SK-N-SH (cell line): ENCODE measurements at regions of chr7 and their contacts with region 1.

Region 1: DNA sequence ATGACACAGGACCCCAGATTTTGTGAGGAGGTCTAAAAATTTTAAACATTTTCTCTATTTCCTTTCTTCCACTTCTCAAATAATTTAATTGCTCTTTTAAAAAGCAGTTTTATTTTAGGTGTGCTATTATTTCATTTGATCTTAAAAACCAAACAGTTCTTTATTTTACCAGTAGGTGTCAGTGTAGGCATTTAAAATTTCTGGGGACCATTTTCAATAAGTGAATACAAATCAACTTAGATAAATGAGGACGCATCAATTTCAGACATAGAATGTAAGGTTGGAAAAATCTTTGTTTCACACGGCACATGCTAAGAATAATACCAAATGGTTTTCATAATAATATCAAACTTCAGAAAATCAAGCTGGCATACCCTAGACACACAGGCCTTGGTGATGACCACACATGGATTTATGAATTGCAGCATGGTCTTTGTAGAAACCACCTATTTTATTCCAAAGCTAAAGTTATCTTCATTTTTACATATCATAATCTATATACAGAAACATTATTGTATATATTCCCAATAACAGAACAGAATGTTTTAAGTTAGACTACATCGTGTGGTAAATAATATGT is 127.6 kb upstream of the SLC26A5 start:
- DNase-seq: peak; percentile 27
- H3K4me3 ChIP-seq: no peak overlapping the region; a peak in 1 of 4 replicates
- H3K27ac ChIP-seq: no peak overlapping the region
- H3K4me1 ChIP-seq: no peaks in the 10 kb centered on the region
- H3K27me3 ChIP-seq: no peaks in the 10 kb centered on the region
- CTCF ChIP-seq: peak; percentile 95
- EP300 ChIP-seq: no peak
- RAD21 ChIP-seq: peak; percentile 85

Region 2: DNA sequence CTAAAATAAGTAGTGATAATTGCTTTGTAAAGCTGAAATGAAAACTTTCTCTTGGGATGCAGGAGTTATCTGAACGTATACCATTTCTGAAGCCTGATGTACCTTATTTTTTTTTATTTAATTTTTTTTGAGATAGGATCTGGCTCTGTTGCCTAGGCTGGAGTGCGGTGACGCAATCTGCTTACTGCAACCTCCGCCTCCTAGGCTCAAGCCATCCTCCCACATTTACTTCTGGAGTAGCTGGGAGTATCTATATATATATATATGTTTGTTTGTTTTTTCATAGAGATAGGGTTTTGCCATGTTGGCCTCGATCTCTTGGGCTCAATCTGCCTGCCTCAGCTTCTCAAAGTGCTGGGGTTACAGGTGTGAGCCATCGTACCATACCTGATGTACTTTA is 273.9 kb before region 1 on chr7:
- CTCF ChIA-PET with region 1: no interaction called
- POLR2A ChIA-PET with region 1: no interaction called
- DNase-seq: no peak
- H3K4me3 ChIP-seq: no peak overlapping the region
- H3K27ac ChIP-seq: no peak overlapping the region
- H3K4me1 ChIP-seq: peaks cover 7 to 15% of the 10 kb centered on the region in 2 experiments; a peak in 2 of 4 replicates
- H3K27me3 ChIP-seq: no peaks in the 10 kb centered on the region
- CTCF ChIP-seq: no peak
- EP300 ChIP-seq: no peak
- RAD21 ChIP-seq: no peak

Region 3: DNA sequence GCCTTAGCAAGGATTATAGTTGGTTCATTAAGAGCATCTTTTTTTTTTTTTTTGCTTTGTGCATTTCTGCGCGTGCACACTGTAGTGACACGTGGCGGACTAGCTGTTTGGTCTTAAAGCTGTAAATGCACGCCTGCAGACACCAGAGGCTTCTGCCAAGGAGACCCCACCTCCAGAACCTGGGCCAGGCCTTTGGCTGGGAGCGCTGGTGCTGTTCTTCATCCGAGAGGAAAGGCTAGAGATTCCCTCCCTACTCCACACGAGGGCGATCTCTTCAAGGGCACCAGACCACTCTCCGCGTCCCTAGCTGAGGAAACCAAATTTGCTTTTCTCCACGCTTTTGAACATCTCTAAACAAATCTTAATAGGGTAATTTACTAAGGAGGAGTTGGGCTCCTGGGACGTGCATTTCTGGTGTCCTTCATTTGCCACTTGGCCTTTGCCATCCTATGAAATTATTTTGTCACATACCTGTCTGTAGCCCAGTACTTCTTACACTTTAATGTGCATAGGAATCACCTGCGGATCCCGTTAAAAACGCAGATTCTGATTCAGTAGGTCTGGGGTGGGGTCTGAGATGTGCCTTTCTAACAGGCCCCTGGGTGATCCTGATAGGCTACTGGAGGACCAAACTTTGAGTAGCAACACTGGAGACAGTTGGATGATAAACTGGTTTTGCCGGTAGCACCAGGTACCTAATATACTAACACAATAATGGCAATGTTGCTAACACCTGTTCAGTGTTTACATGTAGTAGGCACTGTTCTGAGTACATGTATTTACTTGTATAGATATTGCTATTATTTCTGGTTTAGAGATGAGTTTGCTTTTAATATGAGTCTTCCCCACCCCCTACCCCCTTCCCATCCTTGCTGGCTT is 126.3 kb before region 1 on chr7:
- CTCF ChIA-PET with region 1: interaction called, 32 read pairs
- POLR2A ChIA-PET with region 1: no interaction called
- DNase-seq: peak; percentile 86
- H3K4me3 ChIP-seq: no peak overlapping the region; a peak in 1 of 4 replicates
- H3K27ac ChIP-seq: no peak overlapping the region
- H3K4me1 ChIP-seq: peaks cover 0 to 16% of the 10 kb centered on the region in 2 experiments; a peak in 2 of 4 replicates
- H3K27me3 ChIP-seq: peaks cover 41% of the 10 kb centered on the region
- CTCF ChIP-seq: peak; percentile 77
- EP300 ChIP-seq: no peak
- RAD21 ChIP-seq: peak; percentile 88

Region 4: DNA sequence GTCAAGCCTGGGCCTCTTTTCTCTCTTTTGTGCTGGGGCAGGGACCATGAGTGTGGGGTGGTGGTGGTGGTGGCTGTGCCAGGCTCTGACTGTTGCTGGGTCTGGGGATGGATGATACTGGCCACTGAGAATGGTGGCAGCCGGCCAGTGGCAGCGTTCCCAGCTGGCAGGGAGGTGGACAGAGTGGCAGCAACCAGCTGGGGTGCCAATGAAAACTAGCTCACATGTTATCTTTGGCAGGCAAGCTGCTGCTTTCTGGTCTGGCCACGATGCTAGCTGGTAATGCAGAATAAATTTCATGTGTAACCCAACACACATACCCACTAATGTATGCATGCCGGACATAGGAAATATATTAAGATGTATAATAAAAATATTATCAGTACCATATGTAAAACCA is 32.5 kb before region 1 on chr7:
- CTCF ChIA-PET with region 1: interaction called, 11 read pairs
- POLR2A ChIA-PET with region 1: no interaction called
- DNase-seq: peak; percentile 57
- H3K4me3 ChIP-seq: no peak overlapping the region
- H3K27ac ChIP-seq: no peak overlapping the region
- H3K4me1 ChIP-seq: peaks cover 0 to 8% of the 10 kb centered on the region in 2 experiments; a peak in 2 of 4 replicates
- H3K27me3 ChIP-seq: no peaks in the 10 kb centered on the region
- CTCF ChIP-seq: no peak
- EP300 ChIP-seq: no peak
- RAD21 ChIP-seq: no peak

Region 5: DNA sequence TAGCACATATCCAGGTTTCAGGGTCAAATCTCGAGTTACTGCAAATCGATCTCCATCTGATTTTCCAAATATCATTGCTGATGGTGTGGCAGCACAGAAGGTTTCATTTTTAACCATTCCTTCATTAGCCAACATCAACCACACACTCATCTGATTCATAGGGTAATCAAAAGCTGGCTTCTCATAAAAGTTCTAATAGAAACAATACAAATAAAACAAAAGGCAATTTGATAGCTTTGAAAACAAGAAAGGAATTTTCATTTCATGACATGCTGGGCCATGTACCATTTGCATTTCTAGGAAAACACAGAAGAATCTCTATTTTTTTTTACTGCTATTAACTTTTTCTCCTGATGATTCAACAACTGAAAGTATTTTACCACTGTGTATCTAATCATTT is 20.1 kb after region 1 on chr7:
- CTCF ChIA-PET with region 1: interaction called, 20 read pairs
- POLR2A ChIA-PET with region 1: no interaction called
- DNase-seq: no peak
- H3K4me3 ChIP-seq: no peak overlapping the region
- H3K27ac ChIP-seq: no peak overlapping the region
- H3K4me1 ChIP-seq: no peaks in the 10 kb centered on the region
- H3K27me3 ChIP-seq: 0 out of 2 replicates have a peak, but pooled peaks cover 9% of the 10 kb centered on the region
- CTCF ChIP-seq: no peak
- EP300 ChIP-seq: no peak
- RAD21 ChIP-seq: no peak

Region 6: GRCh38 chr7:103636153-103636552 is 62.6 kb after region 1 on chr7:
- CTCF ChIA-PET with region 1: no interaction called
- POLR2A ChIA-PET with region 1: no interaction called
- DNase-seq: no peak
- H3K4me3 ChIP-seq: no peak overlapping the region
- H3K27ac ChIP-seq: peak overlapping the region in 1 of 2 experiments; percentile 88; a peak in 2 of 4 replicates
- H3K4me1 ChIP-seq: peaks cover 0 to 23% of the 10 kb centered on the region in 2 experiments; a peak in 1 of 4 replicates
- H3K27me3 ChIP-seq: no peaks in the 10 kb centered on the region
- CTCF ChIP-seq: no peak
- EP300 ChIP-seq: no peak
- RAD21 ChIP-seq: no peak

Region 7: GRCh38 chr7:104106108-104106905 is 532.7 kb after region 1 on chr7:
- CTCF ChIA-PET with region 1: interaction called, 10 read pairs
- POLR2A ChIA-PET with region 1: no interaction called
- DNase-seq: no peak
- H3K4me3 ChIP-seq: no peak overlapping the region
- H3K27ac ChIP-seq: no peak overlapping the region
- H3K4me1 ChIP-seq: no peaks in the 10 kb centered on the region
- H3K27me3 ChIP-seq: no peaks in the 10 kb centered on the region; the same call in 1 of the 2 replicates
- CTCF ChIP-seq: peak; percentile 49
- EP300 ChIP-seq: no peak
- RAD21 ChIP-seq: peak; percentile 78

Region 8: DNA sequence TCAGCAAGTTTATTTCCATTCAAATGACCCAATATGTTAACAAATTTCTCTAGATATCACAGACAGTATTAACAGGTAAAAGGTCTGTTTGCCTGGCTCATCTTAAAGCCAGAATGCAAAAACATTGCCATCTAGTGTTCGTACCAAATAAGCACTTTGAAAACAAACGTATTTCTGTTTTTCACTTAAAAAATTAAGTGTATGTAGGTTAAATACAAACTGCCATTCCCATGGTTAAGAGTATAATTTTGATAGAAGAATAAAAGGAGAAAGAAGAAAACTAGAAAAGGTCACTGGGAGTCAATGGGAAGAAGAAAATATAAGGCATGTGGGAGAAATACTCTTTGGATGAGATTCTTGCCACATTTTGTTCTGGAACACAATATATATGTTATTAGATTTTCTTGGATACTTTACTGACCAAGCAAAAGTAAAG is 583.3 kb after region 1 on chr7:
- CTCF ChIA-PET with region 1: interaction called, 94 read pairs
- POLR2A ChIA-PET with region 1: no interaction called
- DNase-seq: peak; percentile 24
- H3K4me3 ChIP-seq: peak overlapping the region in 1 of 2 experiments; percentile 30; a peak in 1 of 4 replicates
- H3K27ac ChIP-seq: no peak overlapping the region; a peak in 1 of 4 replicates
- H3K4me1 ChIP-seq: no peaks in the 10 kb centered on the region; a peak in 1 of 4 replicates
- H3K27me3 ChIP-seq: no peaks in the 10 kb centered on the region
- CTCF ChIP-seq: peak; percentile 97
- EP300 ChIP-seq: no peak
- RAD21 ChIP-seq: peak; percentile 94

Region 9: DNA sequence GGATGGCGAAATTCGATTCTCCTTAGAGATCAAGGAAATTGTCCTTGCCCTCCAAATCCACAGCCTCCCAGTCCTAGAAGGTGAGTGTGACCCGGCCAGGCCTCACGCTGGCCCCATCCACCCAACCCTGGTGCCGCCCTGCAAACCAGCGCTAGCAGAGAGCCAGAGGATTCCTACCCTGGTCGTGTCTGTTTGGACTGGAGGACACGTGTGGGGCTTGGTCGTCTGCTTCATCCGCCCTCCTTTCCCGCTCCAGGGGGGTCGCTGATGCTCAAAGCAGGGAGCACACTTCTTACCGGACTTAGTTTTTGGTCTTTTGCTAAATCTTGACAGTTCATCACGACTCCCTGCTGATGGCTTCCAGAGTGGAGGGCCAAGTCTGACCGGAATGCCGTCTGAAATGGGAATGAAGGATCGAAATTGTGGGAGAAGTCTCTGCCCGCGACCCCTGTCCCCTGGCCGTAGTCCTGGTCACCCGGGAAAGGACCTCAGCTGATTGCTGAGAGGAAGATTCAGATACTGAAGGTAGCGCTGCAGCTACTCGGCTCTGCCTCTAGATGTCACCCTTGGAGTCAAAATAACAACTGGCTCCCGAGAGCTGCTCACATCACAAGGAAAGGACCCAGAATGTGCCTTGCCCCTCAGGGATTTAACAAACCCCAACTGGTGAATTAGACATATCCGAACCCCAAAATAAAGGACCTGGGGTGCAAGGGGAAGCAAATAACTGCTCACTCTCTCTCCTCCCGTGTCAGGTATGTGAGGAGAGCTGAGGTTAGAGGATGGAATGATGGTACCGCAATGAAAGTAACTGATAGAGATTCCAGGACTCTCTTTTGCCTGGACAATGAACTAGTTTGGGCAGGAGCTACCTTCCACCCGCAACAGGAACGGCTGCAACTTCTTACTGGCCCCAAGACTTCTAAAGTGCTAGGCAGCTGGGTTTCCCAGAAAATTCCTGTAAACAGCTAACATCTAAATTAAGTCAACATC is 657.8 kb after region 1 on chr7:
- CTCF ChIA-PET with region 1: interaction called, 11 read pairs
- POLR2A ChIA-PET with region 1: no interaction called
- DNase-seq: peak; percentile 79
- H3K4me3 ChIP-seq: no peak overlapping the region; a peak in 2 of 4 replicates
- H3K27ac ChIP-seq: no peak overlapping the region
- H3K4me1 ChIP-seq: peaks cover 0 to 13% of the 10 kb centered on the region in 2 experiments; a peak in 1 of 4 replicates
- H3K27me3 ChIP-seq: peaks cover 13% of the 10 kb centered on the region; the same call in 1 of the 2 replicates
- CTCF ChIP-seq: peak; percentile 94
- EP300 ChIP-seq: no peak
- RAD21 ChIP-seq: peak; percentile 91